ENCODE measurements at regions of chr6 and their contacts with region 1.

Region 1: DNA sequence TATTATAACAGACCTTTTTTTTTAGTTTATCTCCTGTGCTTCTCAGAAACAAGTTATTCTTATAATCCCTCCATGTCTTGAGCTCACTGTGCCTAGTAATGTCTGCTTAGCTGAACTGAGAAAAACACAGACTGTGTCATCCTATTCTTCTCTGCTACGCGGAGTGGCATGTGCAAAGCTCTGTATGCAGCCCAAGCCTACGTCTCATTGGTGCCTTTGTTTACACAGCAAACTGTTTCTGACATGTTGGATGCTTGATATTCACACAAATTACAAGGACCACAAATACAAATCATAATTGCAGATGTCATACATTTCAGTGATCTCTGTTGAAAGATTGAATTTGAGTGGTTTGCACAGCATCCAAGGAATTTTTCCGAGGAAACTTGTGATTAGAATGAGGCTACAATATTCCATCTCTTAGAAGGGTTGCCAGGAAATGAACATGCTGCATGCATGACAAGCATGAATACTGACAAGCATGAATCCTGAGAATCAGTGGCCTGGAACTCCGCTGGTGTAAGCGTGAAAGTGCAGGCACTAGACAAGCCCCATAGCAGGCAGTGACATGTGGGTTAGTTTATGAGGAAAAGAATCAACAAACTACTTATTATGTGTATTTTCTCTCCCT is 128.4 kb upstream of the SGK1 start:
- DNase-seq: no peak
- H3K4me3 ChIP-seq: no peak overlapping the region
- H3K4me3 Mint-ChIP-seq: no peak overlapping the region
- H3K27ac Mint-ChIP-seq: no peak overlapping the region
- H3K4me1 ChIP-seq: no peaks in the 10 kb centered on the region
- H3K4me1 Mint-ChIP-seq: peaks cover 6% of the 10 kb centered on the region
- H3K27me3 ChIP-seq: no peaks in the 10 kb centered on the region
- H3K27me3 Mint-ChIP-seq: no peaks in the 10 kb centered on the region
- CTCF ChIP-seq: peak in 1 of 2 experiments; percentile 2

Region 2: GRCh38 chr6:133837801-133838349 is 608.5 kb before region 1 on chr6:
- CTCF ChIA-PET with region 1: interaction called, 11 read pairs
- POLR2A ChIA-PET with region 1: no interaction called
- intact Hi-C with region 1: no loop called
- DNase-seq: peak; percentile 67 to 83
- H3K4me3 ChIP-seq: peak overlapping the region; percentile 47
- H3K4me3 Mint-ChIP-seq: peak overlapping the region; percentile 70
- H3K27ac Mint-ChIP-seq: peak overlapping the region; percentile 48
- H3K4me1 ChIP-seq: no peaks in the 10 kb centered on the region
- H3K4me1 Mint-ChIP-seq: no peaks in the 10 kb centered on the region
- H3K27me3 ChIP-seq: no peaks in the 10 kb centered on the region
- H3K27me3 Mint-ChIP-seq: no peaks in the 10 kb centered on the region
- CTCF ChIP-seq: peak; percentile 89

Region 3: GRCh38 chr6:134420614-134421181 is 25.6 kb before region 1 on chr6:
- CTCF ChIA-PET with region 1: no interaction called
- POLR2A ChIA-PET with region 1: no interaction called
- intact Hi-C with region 1: no loop called
- DNase-seq: no peak
- H3K4me3 ChIP-seq: no peak overlapping the region
- H3K4me3 Mint-ChIP-seq: no peak overlapping the region
- H3K27ac Mint-ChIP-seq: no peak overlapping the region
- H3K4me1 ChIP-seq: 0 out of 2 replicates have a peak, but pooled peaks cover 13% of the 10 kb centered on the region
- H3K4me1 Mint-ChIP-seq: peaks cover 22% of the 10 kb centered on the region
- H3K27me3 ChIP-seq: no peaks in the 10 kb centered on the region
- H3K27me3 Mint-ChIP-seq: no peaks in the 10 kb centered on the region
- CTCF ChIP-seq: no peak

Region 4: GRCh38 chr6:134491477-134491876 is 45.1 kb after region 1 on chr6:
- CTCF ChIA-PET with region 1: no interaction called
- POLR2A ChIA-PET with region 1: no interaction called
- intact Hi-C with region 1: no loop called
- DNase-seq: no peak
- H3K4me3 ChIP-seq: no peak overlapping the region
- H3K4me3 Mint-ChIP-seq: no peak overlapping the region
- H3K27ac Mint-ChIP-seq: no peak overlapping the region
- H3K4me1 ChIP-seq: no peaks in the 10 kb centered on the region
- H3K4me1 Mint-ChIP-seq: no peaks in the 10 kb centered on the region
- H3K27me3 ChIP-seq: no peaks in the 10 kb centered on the region
- H3K27me3 Mint-ChIP-seq: no peaks in the 10 kb centered on the region
- CTCF ChIP-seq: no peak

Measured in Caco-2 (cell line).